OCI-LY7 (cell line): ENCODE measurements at regions of chr19 and their contacts with region 1.

Region 1: DNA sequence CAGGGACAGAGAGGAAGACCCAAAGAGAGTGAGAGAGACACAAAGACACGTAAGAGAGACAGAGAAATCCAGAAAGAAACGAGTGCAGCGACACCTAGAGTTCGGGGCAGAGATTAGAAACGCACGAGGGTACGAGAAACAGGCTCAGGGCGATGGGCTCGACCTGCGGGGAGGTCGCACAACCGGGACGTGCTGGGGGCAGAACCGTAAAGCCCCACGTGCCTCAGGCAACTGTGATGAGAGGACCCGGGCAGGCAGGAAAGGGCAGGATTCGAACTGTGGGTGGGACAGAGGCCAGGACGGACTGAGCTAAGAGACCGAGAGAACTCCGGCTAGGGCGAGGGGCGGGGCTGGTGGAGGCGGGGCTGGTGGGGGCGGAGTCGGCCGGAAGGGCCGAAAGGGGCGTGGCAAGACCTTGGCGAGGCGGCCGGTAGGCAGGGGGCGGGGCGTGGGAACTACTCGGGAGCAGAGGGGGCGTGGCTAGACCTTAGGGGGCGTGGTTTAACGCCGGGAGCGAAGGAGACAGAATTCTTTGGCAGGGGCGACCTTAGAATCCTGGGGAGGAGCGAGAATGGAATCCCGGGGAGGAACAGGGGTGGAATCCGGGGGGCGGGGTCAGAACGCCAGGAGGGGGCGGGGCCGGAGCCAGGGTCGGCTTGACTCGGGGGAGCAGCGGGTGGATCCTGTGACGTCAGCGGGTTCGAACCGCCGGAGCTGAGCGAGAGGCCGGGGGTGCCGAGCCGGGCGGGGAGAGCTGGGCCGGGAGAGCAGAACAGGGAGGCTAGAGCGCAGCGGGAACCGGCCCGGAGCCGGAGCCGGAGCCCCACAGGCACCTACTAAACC is at the start of gene NECTIN2:
- DNase-seq: peak; percentile 94
- H3K4me3 ChIP-seq: peak within 1 kb of the TSS; percentile 64
- H3K27ac ChIP-seq: peak within 1 kb of the TSS; percentile 41
- H3K4me1 ChIP-seq: peaks cover 16% of the 10 kb centered on the region
- CTCF ChIP-seq: peak; percentile 84
- total RNA-seq, gene NECTIN2: not detected in 2 replicates

Region 2: DNA sequence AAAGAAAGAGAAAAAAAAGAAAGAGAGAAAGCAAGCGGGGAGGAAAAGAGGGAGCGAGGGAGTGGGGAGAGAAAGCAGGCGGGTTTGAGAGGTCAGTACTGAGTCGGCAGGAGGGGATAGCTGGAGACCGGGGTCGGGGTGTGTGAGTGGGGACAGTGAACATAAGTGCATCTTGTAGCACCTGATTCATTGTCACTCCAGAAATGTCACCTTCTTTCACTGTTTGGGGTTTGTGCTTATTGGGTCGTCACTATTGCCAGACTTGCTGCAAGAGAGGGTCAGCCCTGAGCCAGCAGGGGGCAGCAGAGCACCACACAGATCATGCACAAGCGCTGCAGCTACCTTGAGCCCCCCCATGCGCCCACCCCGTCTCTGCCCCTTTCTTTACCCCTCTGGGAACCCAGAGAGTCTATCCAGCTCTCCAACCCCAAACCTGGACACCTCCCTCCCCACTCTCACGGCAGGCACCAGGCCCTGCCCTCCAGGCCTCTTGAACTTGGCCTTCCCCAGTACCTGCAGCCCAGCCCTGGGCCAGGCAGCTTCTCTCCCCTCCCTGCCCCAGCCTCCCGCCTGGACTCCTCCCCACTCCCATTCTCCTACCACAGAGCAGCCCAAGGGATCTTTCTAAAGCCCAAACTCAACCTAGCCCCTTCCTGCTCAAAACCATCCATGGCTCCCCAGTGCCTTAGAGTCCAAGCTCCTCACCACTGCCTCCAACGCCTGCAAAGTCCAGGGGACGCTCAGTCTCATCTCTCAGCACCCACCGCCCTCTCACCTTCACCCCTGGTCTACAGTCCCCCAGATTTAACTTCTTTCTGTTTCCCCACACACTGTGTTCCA is 156.6 kb before region 1 on chr19:
- CTCF ChIA-PET with region 1: no interaction called
- POLR2A ChIA-PET with region 1: interaction called, 4 read pairs
- intact Hi-C with region 1: loop called (anchors 2 kb)
- DNase-seq: peak; percentile 73
- H3K4me3 ChIP-seq: no peak overlapping the region
- H3K27ac ChIP-seq: no peak overlapping the region
- H3K4me1 ChIP-seq: peaks cover 29% of the 10 kb centered on the region
- CTCF ChIP-seq: peak; percentile 95

Region 3: GRCh38 chr19:44712864-44713515 is 132.8 kb before region 1 on chr19:
- CTCF ChIA-PET with region 1: no interaction called
- POLR2A ChIA-PET with region 1: no interaction called
- intact Hi-C with region 1: no loop called
- DNase-seq: no peak
- H3K4me3 ChIP-seq: no peak overlapping the region
- H3K27ac ChIP-seq: no peak overlapping the region
- H3K4me1 ChIP-seq: no peaks in the 10 kb centered on the region
- CTCF ChIP-seq: no peak

Region 4: DNA sequence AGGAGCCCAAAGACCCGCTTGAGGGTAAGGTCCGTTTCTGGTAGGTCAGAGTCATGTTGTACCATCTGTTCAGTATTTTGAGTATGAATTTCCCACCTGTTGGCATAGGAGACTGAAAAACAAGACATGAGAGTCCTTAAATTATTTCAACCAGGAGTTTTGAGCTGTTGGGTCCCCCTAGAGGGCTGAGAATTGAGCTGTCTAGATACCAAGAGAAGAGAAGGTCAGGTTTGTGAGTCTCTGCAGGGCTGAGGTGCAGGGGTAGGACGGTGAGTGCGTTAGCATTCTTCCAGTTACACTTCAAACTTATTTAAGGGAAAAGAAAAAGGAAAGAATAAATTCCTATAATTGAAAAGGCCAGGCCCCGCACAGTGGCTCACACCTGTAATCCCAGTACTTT is 63.1 kb before region 1 on chr19:
- CTCF ChIA-PET with region 1: no interaction called
- POLR2A ChIA-PET with region 1: no interaction called
- intact Hi-C with region 1: loop called (anchors 1 kb)
- DNase-seq: no peak
- H3K4me3 ChIP-seq: no peak overlapping the region
- H3K27ac ChIP-seq: no peak overlapping the region
- H3K4me1 ChIP-seq: peaks cover 4% of the 10 kb centered on the region
- CTCF ChIP-seq: peak; percentile 41; the same call in 1 of the 2 replicates

Region 5: DNA sequence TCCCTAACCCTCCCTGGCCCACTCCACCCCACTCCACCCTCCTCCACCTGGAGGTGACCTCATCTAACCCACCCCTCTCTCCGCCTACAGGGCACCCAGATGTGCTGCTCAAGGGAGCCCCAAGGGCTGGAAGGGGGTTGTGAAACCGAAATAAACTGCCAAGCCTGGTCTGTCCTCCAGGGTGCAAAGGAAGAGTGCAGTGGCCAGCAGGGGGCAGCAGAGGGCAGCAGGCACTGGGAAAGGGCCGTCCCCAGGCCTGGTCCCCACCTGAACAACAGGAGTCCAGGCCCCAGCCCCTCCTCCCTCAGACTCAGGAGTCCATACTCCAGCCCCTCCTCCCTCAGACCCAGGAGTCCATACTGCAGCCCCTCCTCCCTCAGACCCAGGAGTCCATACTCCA is 45.4 kb before region 1 on chr19:
- CTCF ChIA-PET with region 1: no interaction called
- POLR2A ChIA-PET with region 1: no interaction called
- intact Hi-C with region 1: loop called (anchors 1 kb)
- DNase-seq: peak; percentile 87
- H3K4me3 ChIP-seq: no peak overlapping the region
- H3K27ac ChIP-seq: no peak overlapping the region
- H3K4me1 ChIP-seq: peaks cover 19% of the 10 kb centered on the region
- CTCF ChIP-seq: peak; percentile 87